ENCODE measurements at regions of chr20 and their contacts with region 1.

Region 1: GRCh38 chr20:25865380-25866118 is 168.9 kb upstream of the ZNF337 start:
- DNase-seq: peak; percentile 85
- H3K4me3 ChIP-seq: peak overlapping the region; percentile 80
- H3K27ac ChIP-seq: no peak overlapping the region
- H3K4me1 ChIP-seq: no peaks in the 10 kb centered on the region
- H3K27me3 ChIP-seq: peaks cover 3% of the 10 kb centered on the region; the same call in 1 of the 2 replicates

Region 2: GRCh38 chr20:24838546-24839535 is 1026.7 kb before region 1 on chr20:
- in situ Hi-C with region 1: no loop called
- DNase-seq: peak; percentile 74
- H3K4me3 ChIP-seq: no peak overlapping the region
- H3K27ac ChIP-seq: no peak overlapping the region; the same call in 1 of the 2 replicates
- H3K4me1 ChIP-seq: peaks cover 23% of the 10 kb centered on the region
- H3K27me3 ChIP-seq: peaks cover 9% of the 10 kb centered on the region

Region 3: DNA sequence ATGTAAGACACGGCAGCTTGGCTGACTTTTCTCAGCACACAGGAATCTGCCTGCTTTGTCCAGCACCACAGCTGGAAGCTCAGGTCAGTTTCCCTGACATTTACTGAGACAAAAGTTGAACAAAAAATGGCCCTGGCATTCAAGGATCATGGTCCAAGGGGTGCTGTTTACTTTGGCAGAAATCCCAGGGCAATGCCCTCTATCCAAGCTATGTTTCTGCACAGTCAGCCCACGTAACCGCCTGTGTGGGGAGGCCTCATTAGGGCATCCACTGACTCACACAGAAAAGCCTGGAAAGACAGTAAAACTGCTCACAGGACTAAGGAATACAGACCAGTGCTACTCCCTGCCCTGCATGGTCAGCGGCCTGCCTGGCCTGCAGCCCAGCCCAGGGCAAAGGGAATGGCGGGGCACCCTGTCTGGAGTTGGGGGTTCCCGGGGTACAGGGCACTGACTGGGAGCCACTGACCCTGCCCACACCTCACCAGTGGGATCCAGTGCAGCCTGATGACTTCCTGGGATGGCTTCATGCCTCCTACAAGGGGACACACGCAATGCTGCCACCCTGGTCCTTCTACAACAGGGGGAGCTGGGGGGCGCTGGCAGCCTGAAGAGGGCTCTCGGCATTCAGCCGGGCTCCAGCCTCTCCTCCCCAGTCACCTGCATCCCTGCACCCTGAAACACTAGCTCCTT is 357.3 kb before region 1 on chr20:
- in situ Hi-C with region 1: loop called (anchors 25 kb)
- DNase-seq: peak; percentile 82
- H3K4me3 ChIP-seq: no peak overlapping the region
- H3K27ac ChIP-seq: peak overlapping the region; percentile 22; the same call in 1 of the 2 replicates
- H3K4me1 ChIP-seq: peaks cover 7% of the 10 kb centered on the region; the same call in 1 of the 2 replicates
- H3K27me3 ChIP-seq: no peaks in the 10 kb centered on the region

Region 4: GRCh38 chr20:25623736-25624499 is 241.6 kb before region 1 on chr20 and contains the start of gene NANP:
- in situ Hi-C with region 1: no loop called
- DNase-seq: peak; percentile 99
- H3K4me3 ChIP-seq: peak within 1 kb of the TSS; percentile 93
- H3K27ac ChIP-seq: peak within 1 kb of the TSS; percentile 84
- H3K4me1 ChIP-seq: peaks cover 4% of the 10 kb centered on the region
- H3K27me3 ChIP-seq: no peaks in the 10 kb centered on the region
- total RNA-seq, gene NANP: 4.0 and 7.1 TPM in 2 replicates

Region 5: DNA sequence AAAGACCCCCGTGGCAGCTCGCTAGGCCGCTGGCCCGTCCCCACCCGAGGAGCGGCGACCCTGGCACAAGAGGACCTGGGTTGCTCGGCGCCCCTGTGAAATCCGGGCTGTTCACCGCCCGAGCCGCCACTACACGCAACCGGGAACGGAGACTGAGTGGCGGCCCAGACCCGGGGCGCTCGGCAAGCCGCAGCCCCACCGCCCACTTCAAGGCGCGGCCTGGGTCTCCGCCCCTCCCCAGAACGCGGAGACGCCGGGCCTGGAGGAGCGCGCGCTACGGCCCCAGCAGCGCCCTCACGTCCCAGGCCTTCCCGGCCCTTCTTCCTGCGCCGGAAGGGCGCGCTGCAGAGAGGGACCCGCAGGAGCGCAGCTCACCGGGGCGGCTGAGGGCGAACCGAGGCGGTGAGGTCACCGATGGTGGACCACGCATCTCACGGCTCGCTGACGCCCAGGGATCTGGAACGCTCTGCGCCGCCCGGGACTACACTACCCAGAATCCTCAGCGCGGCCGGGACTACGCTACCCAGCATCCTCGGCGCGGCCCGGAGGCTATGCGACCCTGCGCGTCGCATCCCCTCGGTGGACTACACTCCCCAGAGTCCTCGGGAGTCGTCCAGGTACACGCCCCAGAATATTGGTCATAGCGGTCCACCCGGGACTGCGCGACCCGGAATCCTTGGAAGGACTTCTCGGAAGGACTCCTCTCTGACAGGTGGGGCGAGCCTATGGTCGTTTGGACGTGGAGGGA is 169.0 kb before region 1 on chr20 and contains the start of gene ZNF337:
- in situ Hi-C with region 1: loop called (anchors 25 kb)
- DNase-seq: peak; percentile 98
- H3K4me3 ChIP-seq: peak within 1 kb of the TSS; percentile 94
- H3K27ac ChIP-seq: peak within 1 kb of the TSS; percentile 66
- H3K4me1 ChIP-seq: peaks cover 5% of the 10 kb centered on the region; the same call in 1 of the 2 replicates
- H3K27me3 ChIP-seq: no peaks in the 10 kb centered on the region
- total RNA-seq, gene ZNF337: 6.4 and 9.1 TPM in 2 replicates

Region 6: GRCh38 chr20:25739615-25740320 is 125.8 kb before region 1 on chr20:
- in situ Hi-C with region 1: no loop called
- DNase-seq: no peak
- H3K4me3 ChIP-seq: no peak overlapping the region
- H3K27ac ChIP-seq: no peak overlapping the region
- H3K4me1 ChIP-seq: no peaks in the 10 kb centered on the region
- H3K27me3 ChIP-seq: no peaks in the 10 kb centered on the region

Region 7: DNA sequence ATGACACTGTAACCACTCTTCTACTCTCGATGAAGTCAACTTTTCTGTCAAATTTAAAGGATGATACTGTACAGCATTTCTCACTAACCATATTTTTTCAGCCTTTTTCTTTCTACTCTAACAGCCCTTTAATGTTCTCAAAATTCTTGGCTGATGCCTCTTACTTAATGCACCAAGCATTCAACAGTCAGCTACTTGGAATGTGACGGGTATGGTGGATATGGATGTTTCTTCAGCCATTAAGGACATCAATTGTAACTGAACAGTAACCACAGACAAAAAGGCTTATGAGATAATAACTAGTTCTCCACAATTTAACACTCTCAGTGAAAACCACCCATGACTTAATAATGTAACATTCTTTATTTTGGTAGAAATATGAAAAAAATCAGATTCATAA is 298.3 kb after region 1 on chr20:
- in situ Hi-C with region 1: no loop called
- DNase-seq: peak; percentile 86
- H3K4me3 ChIP-seq: no peak overlapping the region
- H3K27ac ChIP-seq: peak overlapping the region; percentile 42
- H3K4me1 ChIP-seq: peaks cover 62% of the 10 kb centered on the region
- H3K27me3 ChIP-seq: no peaks in the 10 kb centered on the region

Measured in GM23248 (cell line).